ENCODE measurements at regions of chr14 and their contacts with region 1.

Region 1: DNA sequence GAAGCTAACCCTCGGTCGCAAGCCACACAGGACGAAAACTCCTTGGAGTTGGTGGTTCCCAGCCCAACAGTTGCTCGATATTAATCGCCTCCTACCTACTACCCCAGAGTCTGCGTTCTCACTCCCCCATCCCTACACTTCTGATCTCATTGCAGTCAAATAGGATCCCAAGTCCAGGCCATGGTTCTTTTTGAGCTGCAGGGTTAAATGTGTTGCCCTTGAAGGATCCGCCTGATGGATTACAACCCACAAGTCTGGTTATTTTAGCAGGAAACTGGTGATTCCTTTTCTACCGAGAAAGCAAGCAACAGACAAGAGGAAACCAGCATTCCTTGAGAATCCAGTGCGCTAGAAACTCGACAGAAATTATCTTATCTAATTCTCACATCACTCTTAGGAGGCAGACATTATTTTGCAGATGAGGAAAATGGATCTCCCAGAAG is 785 bp upstream of the NIN start:
- DNase-seq: no peak
- H3K4me3 ChIP-seq: peak overlapping the region; percentile 57 to 99
- H3K27ac ChIP-seq: peak overlapping the region; percentile 90
- H3K4me1 ChIP-seq: peaks cover 30% of the 10 kb centered on the region
- H3K27me3 ChIP-seq: no peaks in the 10 kb centered on the region
- CTCF ChIP-seq: no peak
- POLR2A ChIP-seq: no peak

Region 2: DNA sequence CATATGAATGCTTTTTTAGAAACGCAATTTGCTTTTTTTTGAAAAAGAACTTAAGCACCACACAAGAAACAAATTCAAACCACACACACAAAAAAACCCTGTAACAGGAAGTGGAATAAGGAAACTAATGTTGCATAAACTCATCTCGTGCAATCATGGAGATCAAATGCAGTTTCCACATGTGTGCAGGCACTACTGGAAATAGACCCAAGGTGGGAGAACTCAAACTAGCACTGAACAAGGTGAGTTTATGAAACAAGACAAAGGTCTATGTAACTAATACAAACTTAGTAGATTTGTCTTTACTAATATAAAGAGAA is 18.2 kb before region 1 on chr14:
- intact Hi-C with region 1: loop called (anchors 2 kb)
- DNase-seq: no peak
- H3K4me3 ChIP-seq: no peak overlapping the region
- H3K27ac ChIP-seq: no peak overlapping the region
- H3K4me1 ChIP-seq: peaks cover 8% of the 10 kb centered on the region
- H3K27me3 ChIP-seq: no peaks in the 10 kb centered on the region
- CTCF ChIP-seq: no peak
- POLR2A ChIP-seq: no peak

Region 3: DNA sequence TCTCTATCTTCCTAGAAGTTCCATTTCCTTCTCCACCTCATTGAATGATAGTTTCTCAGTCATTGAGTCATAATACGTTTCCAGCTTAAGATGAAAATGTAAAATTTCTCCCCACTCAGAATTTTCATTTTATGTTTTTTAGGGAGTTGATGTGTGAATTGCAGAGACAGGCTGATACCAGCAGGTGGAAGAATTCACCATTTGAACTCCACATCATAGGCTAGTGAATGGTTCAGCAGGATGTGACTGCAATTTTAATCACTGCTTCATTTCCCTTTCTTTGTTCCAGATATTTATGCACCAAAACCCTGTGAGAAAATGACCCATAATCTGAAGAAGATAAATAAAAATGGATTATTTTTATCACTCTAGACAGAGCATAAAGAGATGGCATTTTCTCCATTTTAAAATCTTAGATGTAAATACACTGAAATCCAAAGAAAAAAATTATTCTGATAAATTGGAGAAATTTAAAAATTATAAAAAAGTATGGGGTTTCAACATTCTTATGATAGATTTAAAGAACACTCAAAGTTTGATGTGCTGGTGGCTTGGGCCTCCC is 123.1 kb after region 1 on chr14:
- intact Hi-C with region 1: no loop called
- DNase-seq: no peak
- H3K4me3 ChIP-seq: no peak overlapping the region
- H3K27ac ChIP-seq: peak overlapping the region; percentile 42
- H3K4me1 ChIP-seq: peaks cover 11% of the 10 kb centered on the region
- H3K27me3 ChIP-seq: no peaks in the 10 kb centered on the region
- CTCF ChIP-seq: peak; percentile 37 to 63 (median 63)
- POLR2A ChIP-seq: no peak

Region 4: DNA sequence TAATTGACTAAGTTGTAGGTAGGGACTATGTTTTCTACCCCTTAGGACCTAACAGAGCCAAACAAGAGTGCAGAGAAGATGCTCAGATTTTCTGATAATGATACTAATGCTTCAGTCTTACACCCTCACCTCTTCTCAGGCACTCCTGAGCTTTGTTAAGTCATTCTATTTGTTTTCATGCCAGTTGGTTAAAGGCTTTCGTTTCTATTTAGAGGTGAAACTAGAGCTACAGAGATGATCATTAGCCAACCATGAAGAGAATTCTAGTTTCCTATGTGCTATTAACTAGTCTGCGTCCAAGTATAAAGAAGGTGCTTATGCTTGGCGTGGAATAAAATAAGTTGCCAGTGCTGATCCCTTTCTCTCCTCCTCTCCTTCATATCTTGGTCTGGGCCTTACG is 147.1 kb after region 1 on chr14:
- intact Hi-C with region 1: no loop called
- DNase-seq: no peak
- H3K4me3 ChIP-seq: no peak overlapping the region
- H3K27ac ChIP-seq: no peak overlapping the region
- H3K4me1 ChIP-seq: no peaks in the 10 kb centered on the region
- H3K27me3 ChIP-seq: no peaks in the 10 kb centered on the region
- CTCF ChIP-seq: no peak
- POLR2A ChIP-seq: no peak

Measured in vagina (tissue), 2 donors.